K562 (cell line): ENCODE measurements at regions of chr2 and their contacts with region 1.

Region 1: GRCh38 chr2:175684457-175684856 is 317.6 kb downstream of the LNPK start:
- DNase-seq: no peak
- ATAC-seq: no peak
- H3K4me3 ChIP-seq: no peak overlapping the region
- H3K27ac ChIP-seq: no peak overlapping the region
- H3K4me1 ChIP-seq: no peaks in the 10 kb centered on the region
- H3K27me3 ChIP-seq: peaks cover 0 to 6% of the 10 kb centered on the region in 2 experiments; a peak in 4 of 5 replicates
- CTCF ChIP-seq: no peak
- EP300 ChIP-seq: no peak
- POLR2A ChIP-seq: no peak
- RAD21 ChIP-seq: no peak

Region 2: GRCh38 chr2:175030380-175031271 is 653.8 kb before region 1 on chr2:
- CTCF ChIA-PET with region 1: no interaction called
- POLR2A ChIA-PET with region 1: no interaction called
- in situ Hi-C with region 1: no loop called
- intact Hi-C with region 1: loop called (anchors 10 kb)
- DNase-seq: peak in 2 of 4 experiments; percentile 36 to 55
- ATAC-seq: peak; percentile 98
- H3K4me3 ChIP-seq: no peak overlapping the region
- H3K27ac ChIP-seq: no peak overlapping the region
- H3K4me1 ChIP-seq: no peaks in the 10 kb centered on the region
- H3K27me3 ChIP-seq: peaks cover 0 to 6% of the 10 kb centered on the region in 2 experiments; a peak in 3 of 5 replicates
- CTCF ChIP-seq: peak; percentile 60 to 73 (median 68)
- EP300 ChIP-seq: no peak
- POLR2A ChIP-seq: no peak
- RAD21 ChIP-seq: peak; percentile 55 to 82

Region 3: GRCh38 chr2:175404839-175405238 is 279.6 kb before region 1 on chr2:
- CTCF ChIA-PET with region 1: no interaction called
- POLR2A ChIA-PET with region 1: no interaction called
- in situ Hi-C with region 1: no loop called
- intact Hi-C with region 1: no loop called
- DNase-seq: no peak
- ATAC-seq: no peak
- H3K4me3 ChIP-seq: no peak overlapping the region
- H3K27ac ChIP-seq: no peak overlapping the region
- H3K4me1 ChIP-seq: no peaks in the 10 kb centered on the region
- H3K27me3 ChIP-seq: no peaks in the 10 kb centered on the region; a peak in 1 of 5 replicates
- CTCF ChIP-seq: no peak
- EP300 ChIP-seq: no peak
- POLR2A ChIP-seq: no peak
- RAD21 ChIP-seq: no peak

Region 4: GRCh38 chr2:175855794-175856453 is 171.5 kb after region 1 on chr2:
- CTCF ChIA-PET with region 1: no interaction called
- POLR2A ChIA-PET with region 1: no interaction called
- in situ Hi-C with region 1: no loop called
- intact Hi-C with region 1: loop called (anchors 10 kb)
- DNase-seq: no peak
- ATAC-seq: no peak
- H3K4me3 ChIP-seq: no peak overlapping the region
- H3K27ac ChIP-seq: no peak overlapping the region
- H3K4me1 ChIP-seq: no peaks in the 10 kb centered on the region
- H3K27me3 ChIP-seq: peaks cover 11 to 15% of the 10 kb centered on the region in 2 experiments; a peak in 4 of 5 replicates
- CTCF ChIP-seq: no peak
- EP300 ChIP-seq: no peak
- POLR2A ChIP-seq: no peak
- RAD21 ChIP-seq: no peak

Region 5: GRCh38 chr2:176079831-176080539 is 395.5 kb after region 1 on chr2:
- CTCF ChIA-PET with region 1: interaction called, 14 read pairs
- POLR2A ChIA-PET with region 1: no interaction called
- in situ Hi-C with region 1: loop called (anchors 10 kb)
- intact Hi-C with region 1: no loop called
- DNase-seq: peak; percentile 84 to 95 (median 94)
- ATAC-seq: peak; percentile 97
- H3K4me3 ChIP-seq: peak overlapping the region; percentile 52
- H3K27ac ChIP-seq: no peak overlapping the region
- H3K4me1 ChIP-seq: peaks cover 3 to 29% of the 10 kb centered on the region in 2 experiments; a peak in 3 of 5 replicates
- H3K27me3 ChIP-seq: peaks cover 49 to 68% of the 10 kb centered on the region in 2 experiments
- CTCF ChIP-seq: peak; percentile 97 to 99 (median 98)
- EP300 ChIP-seq: no peak
- POLR2A ChIP-seq: no peak
- RAD21 ChIP-seq: peak; percentile 89 to 94